Cardiac septum (tissue), 1 donor: ENCODE measurements at regions of chr2 and their contacts with region 1.

Region 1: GRCh38 chr2:179422037-179422643 is 157.5 kb upstream of the SESTD1 start:
- DNase-seq: no peak

Region 2: GRCh38 chr2:179322289-179322688 is 99.9 kb before region 1 on chr2:
- intact Hi-C with region 1: no loop called
- DNase-seq: no peak

Region 3: DNA sequence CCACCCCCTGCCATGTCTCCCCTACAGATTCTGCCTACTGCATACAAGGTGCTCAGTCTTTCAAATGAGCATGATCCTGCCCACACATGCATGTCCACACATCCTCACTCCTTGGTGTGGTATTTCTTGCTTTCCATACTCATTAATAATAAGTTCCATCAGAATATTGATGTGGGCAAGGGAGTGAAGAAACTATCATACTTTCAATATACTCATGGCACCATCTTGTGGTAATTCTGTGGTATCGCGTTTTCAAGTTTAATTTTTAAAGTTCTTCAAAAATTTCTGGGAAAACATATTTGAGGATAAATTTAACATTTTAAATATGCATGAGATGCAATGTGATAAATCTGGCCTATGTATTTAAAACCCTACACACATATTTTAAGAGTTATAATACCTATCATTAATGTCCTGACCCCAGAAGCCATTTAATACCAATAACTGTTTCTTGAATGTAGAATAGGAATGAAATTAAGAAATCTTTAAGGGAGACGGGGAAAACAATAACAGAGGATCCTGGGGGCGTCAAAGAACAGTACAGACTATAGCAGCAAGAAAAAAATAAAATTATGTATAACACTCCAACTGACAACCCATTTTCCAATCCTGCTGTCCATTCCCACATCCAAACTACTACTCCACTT is 329.1 kb after region 1 on chr2:
- intact Hi-C with region 1: loop called (anchors 1 kb)
- DNase-seq: no peak